HCT116 (cell line): ENCODE measurements at regions of chr15 and their contacts with region 1.

Region 1: GRCh38 chr15:77821188-77821958 is 188.7 kb upstream of the LINGO1 start:
- DNase-seq: peak; percentile 37
- ATAC-seq: peak; percentile 73
- H3K4me3 ChIP-seq: no peak overlapping the region
- H3K27ac ChIP-seq: no peak overlapping the region
- H3K4me1 ChIP-seq: peaks cover 0 to 12% of the 10 kb centered on the region in 2 experiments; a peak in 2 of 4 replicates
- H3K27me3 ChIP-seq: no peaks in the 10 kb centered on the region; the same call in 1 of the 2 replicates
- CTCF ChIP-seq: peak; percentile 87 to 93 (median 90)
- POLR2A ChIP-seq: no peak
- RAD21 ChIP-seq: peak; percentile 87

Region 2: GRCh38 chr15:77024271-77025082 is 796.9 kb before region 1 on chr15:
- CTCF ChIA-PET with region 1: no interaction called
- POLR2A ChIA-PET with region 1: no interaction called
- RAD21 ChIA-PET with region 1: no interaction called
- intact Hi-C with region 1: loop called (anchors 5 kb)
- DNase-seq: no peak
- ATAC-seq: peak; percentile 87
- H3K4me3 ChIP-seq: no peak overlapping the region
- H3K27ac ChIP-seq: no peak overlapping the region
- H3K4me1 ChIP-seq: peaks cover 0 to 2% of the 10 kb centered on the region in 2 experiments; a peak in 1 of 4 replicates
- H3K27me3 ChIP-seq: no peaks in the 10 kb centered on the region
- CTCF ChIP-seq: peak; percentile 65 to 98 (median 94); a peak in 5 of 6 replicates
- POLR2A ChIP-seq: no peak
- RAD21 ChIP-seq: peak; percentile 75

Region 3: DNA sequence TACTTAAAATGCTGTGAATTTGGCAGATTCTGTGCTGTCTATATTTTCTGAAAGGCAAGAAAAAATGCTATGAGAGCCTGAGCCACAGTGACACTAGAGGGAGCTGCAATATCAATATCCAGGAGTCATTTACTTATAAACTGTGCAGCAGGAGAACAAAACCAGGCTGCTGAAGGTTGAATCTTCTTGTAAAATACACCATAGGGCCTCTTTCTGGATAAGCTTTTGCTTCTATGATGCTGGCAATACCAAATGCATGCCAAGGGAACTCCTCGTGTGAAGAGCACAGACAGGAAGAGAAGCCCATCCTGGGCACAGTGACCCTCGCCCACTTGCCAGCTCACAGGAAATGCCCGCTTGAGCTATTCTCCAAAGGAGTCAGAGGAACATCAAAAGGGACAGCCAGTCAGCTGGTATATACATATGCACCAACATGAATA is 702.5 kb before region 1 on chr15:
- CTCF ChIA-PET with region 1: interaction called, 4 read pairs
- POLR2A ChIA-PET with region 1: no interaction called
- RAD21 ChIA-PET with region 1: no interaction called
- intact Hi-C with region 1: loop called (anchors 2 kb)
- DNase-seq: peak; percentile 36
- ATAC-seq: peak; percentile 83
- H3K4me3 ChIP-seq: no peak overlapping the region
- H3K27ac ChIP-seq: no peak overlapping the region
- H3K4me1 ChIP-seq: 0 out of 4 replicates have a peak, but pooled peaks cover 0 to 3% of the 10 kb centered on the region in 2 experiments
- H3K27me3 ChIP-seq: no peaks in the 10 kb centered on the region
- CTCF ChIP-seq: peak; percentile 72 to 77 (median 75)
- POLR2A ChIP-seq: no peak
- RAD21 ChIP-seq: peak; percentile 81

Region 4: GRCh38 chr15:77617476-77618230 is 203.7 kb before region 1 on chr15:
- CTCF ChIA-PET with region 1: interaction called, 25 read pairs
- POLR2A ChIA-PET with region 1: no interaction called
- RAD21 ChIA-PET with region 1: no interaction called
- intact Hi-C with region 1: loop called (anchors 1 kb)
- DNase-seq: peak; percentile 13
- ATAC-seq: peak; percentile 89
- H3K4me3 ChIP-seq: no peak overlapping the region
- H3K27ac ChIP-seq: no peak overlapping the region
- H3K4me1 ChIP-seq: peaks cover 0 to 3% of the 10 kb centered on the region in 2 experiments; a peak in 2 of 4 replicates
- H3K27me3 ChIP-seq: no peaks in the 10 kb centered on the region
- CTCF ChIP-seq: peak; percentile 42 to 82 (median 79); a peak in 5 of 6 replicates
- POLR2A ChIP-seq: no peak
- RAD21 ChIP-seq: peak; percentile 30

Region 5: DNA sequence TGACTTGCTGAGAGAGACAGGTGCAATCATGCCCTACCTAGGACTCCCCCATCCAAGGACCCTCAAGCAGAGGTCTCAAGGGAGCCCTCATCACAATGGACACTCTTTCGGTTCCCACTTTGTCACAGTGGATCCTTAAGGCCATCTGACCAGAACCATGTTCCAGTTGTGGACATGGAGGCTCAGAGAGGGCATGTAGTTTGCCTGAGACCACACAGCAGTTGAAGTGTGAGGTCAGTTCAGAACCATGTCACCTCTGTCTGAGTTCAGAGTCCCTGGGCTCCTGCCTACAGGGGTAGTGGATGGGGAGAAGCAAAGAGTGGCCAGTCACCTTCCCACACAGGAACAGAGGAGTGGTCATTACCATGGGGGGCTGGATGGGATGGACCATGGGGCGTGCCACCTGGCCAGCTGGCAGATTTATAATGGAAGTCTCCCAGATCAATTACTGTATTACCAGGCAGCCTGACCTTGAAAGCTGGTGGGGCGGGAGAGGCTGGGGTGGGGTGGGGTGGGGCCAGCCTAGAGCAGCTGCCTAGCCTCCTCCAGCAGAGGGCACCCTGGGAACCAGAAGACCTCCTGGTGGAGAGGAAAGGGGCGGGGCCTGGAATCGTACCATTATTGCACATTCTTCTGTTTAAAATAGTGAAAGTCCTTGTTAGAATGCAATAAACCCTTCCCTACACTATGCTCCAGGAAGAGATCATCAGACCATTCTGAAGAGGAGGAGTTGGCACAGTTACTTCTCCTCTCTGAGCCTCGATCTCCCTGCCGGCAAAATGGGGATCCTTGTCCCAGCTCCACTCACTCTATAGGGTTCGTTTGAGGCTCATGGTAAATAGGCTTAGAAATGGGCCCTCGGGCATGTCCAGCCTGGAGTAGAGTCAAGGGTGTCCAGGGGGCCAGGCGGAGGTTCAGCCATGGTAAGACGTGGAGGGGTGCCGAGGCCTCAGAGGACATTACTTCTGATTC is 161.7 kb before region 1 on chr15:
- CTCF ChIA-PET with region 1: interaction called, 22 read pairs
- POLR2A ChIA-PET with region 1: no interaction called
- RAD21 ChIA-PET with region 1: interaction called, 7 to 10 read pairs
- intact Hi-C with region 1: loop called (anchors 1 kb)
- DNase-seq: peak; percentile 34
- ATAC-seq: peak; percentile 89
- H3K4me3 ChIP-seq: no peak overlapping the region
- H3K27ac ChIP-seq: no peak overlapping the region
- H3K4me1 ChIP-seq: peaks cover 2 to 10% of the 10 kb centered on the region in 2 experiments; a peak in 3 of 4 replicates
- H3K27me3 ChIP-seq: no peaks in the 10 kb centered on the region
- CTCF ChIP-seq: peak; percentile 46 to 61 (median 56); a peak in 5 of 6 replicates
- POLR2A ChIP-seq: no peak
- RAD21 ChIP-seq: peak; percentile 50

Region 6: DNA sequence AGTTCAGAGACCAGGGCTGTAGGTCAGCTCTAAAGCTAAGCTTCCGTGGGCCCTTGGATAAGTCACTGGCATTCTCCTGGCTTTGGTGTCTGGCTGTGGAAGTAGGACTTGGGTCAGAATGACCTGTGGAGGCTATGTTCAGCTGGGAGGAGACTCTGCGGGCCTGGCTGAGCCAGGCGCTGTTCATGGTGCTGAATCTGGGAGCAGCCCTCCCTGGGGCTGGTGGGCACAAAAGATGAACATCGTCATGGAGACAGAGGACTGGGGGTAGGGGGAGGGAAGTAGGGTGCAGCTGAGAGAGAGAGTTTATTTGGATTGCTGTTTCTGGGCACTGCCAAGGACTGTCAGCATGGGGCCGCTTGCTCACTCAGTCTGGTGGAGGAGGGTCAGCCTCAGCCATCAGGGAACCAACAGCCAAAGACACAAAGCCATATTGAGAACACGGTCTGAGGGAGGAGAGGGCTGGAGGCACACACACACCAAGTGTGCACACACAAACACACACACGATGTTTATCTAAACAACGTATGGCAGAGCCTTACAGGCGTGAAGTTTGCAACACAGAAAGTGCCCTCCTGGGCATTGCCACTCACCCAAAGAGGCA is 68.0 kb before region 1 on chr15:
- CTCF ChIA-PET with region 1: no interaction called
- POLR2A ChIA-PET with region 1: no interaction called
- RAD21 ChIA-PET with region 1: no interaction called
- intact Hi-C with region 1: no loop called
- DNase-seq: no peak
- ATAC-seq: no peak
- H3K4me3 ChIP-seq: no peak overlapping the region
- H3K27ac ChIP-seq: no peak overlapping the region
- H3K4me1 ChIP-seq: peaks cover 2 to 3% of the 10 kb centered on the region in 2 experiments; a peak in 3 of 4 replicates
- H3K27me3 ChIP-seq: no peaks in the 10 kb centered on the region
- CTCF ChIP-seq: no peak
- POLR2A ChIP-seq: no peak
- RAD21 ChIP-seq: no peak